Sigmoid colon (tissue), 7 donors: ENCODE measurements at regions of chr18 and their contacts with region 1.

Region 1: GRCh38 chr18:63148449-63149301 is 170.9 kb downstream of the BCL2 start:
- DNase-seq: peak; percentile 79
- H3K4me3 ChIP-seq: no peak overlapping the region
- H3K27ac ChIP-seq: peak overlapping the region; percentile 17 to 57 (median 48)
- H3K4me1 ChIP-seq: peaks cover 0 to 26% (median 17%) of the 10 kb centered on the region in 4 donors
- H3K27me3 ChIP-seq: no peaks in the 10 kb centered on the region
- CTCF ChIP-seq: no peak
- EP300 ChIP-seq: no peak
- POLR2A ChIP-seq: no peak

Region 2: DNA sequence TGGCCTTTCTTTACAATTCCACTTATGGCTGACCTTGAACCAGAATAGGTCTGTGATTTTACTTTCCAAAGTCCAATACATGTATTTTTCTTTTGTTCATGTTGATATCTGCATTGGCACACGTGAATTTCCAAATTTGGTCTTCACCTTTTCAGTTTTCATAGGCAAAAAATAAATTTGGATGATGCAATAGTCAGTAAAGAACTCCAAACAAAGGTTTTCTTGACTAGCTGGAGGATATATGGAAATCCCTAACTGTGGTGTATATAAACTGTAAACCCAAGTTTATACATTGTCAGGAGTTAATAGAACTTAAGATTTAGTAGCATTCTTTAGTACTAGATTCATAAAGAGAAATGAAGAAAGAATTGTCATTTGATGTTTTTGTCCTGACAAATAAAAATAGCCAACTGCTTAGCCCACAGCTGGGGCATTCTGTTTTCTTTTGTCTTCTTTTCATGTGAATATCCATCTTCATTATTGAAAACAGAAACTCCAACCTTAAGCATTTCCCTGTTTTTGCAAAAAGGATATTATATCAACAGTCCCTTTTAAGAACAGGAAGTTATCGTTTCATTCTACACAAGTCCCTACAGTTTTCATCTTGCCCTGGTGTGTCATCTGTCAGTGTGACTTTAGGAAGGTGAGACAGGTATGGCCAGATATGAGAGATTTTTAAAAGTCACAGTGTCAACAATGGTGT is 38.0 kb after region 1 on chr18:
- intact Hi-C with region 1: loop called (anchors 5 kb)
- DNase-seq: no peak
- H3K4me3 ChIP-seq: no peak overlapping the region
- H3K27ac ChIP-seq: peak overlapping the region in 2 of 4 donors; percentile 49 to 70
- H3K4me1 ChIP-seq: peaks cover 0 to 58% (median 49%) of the 10 kb centered on the region in 4 donors
- H3K27me3 ChIP-seq: no peaks in the 10 kb centered on the region
- CTCF ChIP-seq: no peak
- EP300 ChIP-seq: no peak
- POLR2A ChIP-seq: no peak

Region 3: DNA sequence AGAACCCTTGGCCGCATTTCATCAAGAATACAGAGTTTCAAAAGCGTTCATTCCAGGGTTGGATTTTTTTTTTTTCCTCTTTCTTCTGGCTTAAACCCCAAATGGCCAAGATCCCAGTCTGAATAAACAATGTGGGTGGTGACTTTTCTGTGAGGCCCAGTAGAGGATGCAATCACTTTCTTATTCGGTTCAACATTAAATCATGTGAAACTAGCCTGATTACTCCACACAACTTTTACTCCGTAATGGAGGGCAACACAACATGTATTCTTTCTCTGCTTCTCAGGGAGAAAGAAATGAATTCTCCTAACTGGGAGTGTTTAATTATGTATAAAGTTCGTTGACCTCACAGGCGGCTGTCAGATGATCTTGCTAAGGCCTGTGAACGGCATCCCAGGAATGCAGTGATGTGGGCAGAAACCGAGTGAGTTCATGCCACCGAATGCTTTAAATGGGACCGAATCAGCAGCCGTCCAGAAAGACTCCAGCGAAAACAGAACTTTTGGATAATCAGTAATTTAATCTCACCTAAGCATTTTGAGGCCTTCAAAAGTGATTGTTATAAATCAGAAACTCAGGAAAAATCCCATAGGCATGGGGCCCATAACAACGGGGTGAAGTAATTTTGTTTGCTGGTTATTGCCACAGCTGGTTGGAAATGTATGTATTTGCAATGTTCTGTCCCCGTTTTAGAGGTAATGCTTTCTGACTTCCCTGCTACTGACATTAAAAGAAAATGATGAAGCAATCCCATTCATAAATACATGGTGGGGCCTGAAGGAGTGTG is 89.4 kb after region 1 on chr18:
- intact Hi-C with region 1: loop called (anchors 5 kb)
- DNase-seq: no peak
- H3K4me3 ChIP-seq: peak overlapping the region in 2 of 4 donors; percentile 14 to 17
- H3K27ac ChIP-seq: peak overlapping the region; percentile 78 to 88 (median 84)
- H3K4me1 ChIP-seq: peaks cover 0 to 34% (median 24%) of the 10 kb centered on the region in 4 donors
- H3K27me3 ChIP-seq: no peaks in the 10 kb centered on the region
- CTCF ChIP-seq: no peak
- EP300 ChIP-seq: peak in 1 of 4 donors; percentile 27
- POLR2A ChIP-seq: no peak